GM12878 (cell line): ENCODE measurements at regions of chr3 and their contacts with region 1.

Region 1: DNA sequence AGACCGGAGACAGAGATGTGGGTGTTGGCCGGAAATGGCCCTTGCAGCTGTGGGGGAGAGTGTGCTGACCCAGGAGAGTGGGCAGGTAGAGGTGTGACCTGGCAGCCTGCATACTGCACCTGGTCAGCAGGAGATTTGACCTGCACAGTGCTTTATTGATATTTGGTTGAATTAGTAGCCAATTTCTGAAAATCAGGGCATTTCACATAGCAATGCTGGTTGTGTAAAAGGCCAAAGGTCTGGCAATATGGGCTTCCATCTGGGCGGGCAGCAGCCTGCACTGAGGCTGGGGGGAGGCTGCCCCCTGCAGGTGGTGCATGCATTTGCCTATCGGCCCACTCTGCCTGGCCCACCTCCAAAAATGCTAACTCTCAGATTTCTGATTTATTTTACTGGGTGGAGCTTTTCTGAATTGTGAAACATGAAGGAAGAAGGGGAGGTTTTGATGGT is 9.4 kb upstream of the MGLL start:
- DNase-seq: no peak
- ATAC-seq: peak; percentile 15; the same call in 1 of the 3 replicates
- H3K4me3 ChIP-seq: no peak overlapping the region
- H3K27ac ChIP-seq: no peak overlapping the region
- H3K4me1 ChIP-seq: peaks cover 37% of the 10 kb centered on the region
- H3K27me3 ChIP-seq: no peaks in the 10 kb centered on the region
- CTCF ChIP-seq: peak; percentile 37 to 64 (median 58)
- EP300 ChIP-seq: no peak
- POLR2A ChIP-seq: no peak
- RAD21 ChIP-seq: peak; percentile 73

Region 2: GRCh38 chr3:127697551-127698240 is 134.1 kb before region 1 on chr3:
- CTCF ChIA-PET with region 1: interaction called, 12 read pairs
- POLR2A ChIA-PET with region 1: no interaction called
- RAD21 ChIA-PET with region 1: no interaction called
- SMC1A ChIA-PET with region 1: interaction called, 9 read pairs
- in situ Hi-C with region 1: no loop called
- intact Hi-C with region 1: loop called (anchors 5 kb)
- DNase-seq: peak; percentile 48
- ATAC-seq: peak; percentile 94
- H3K4me3 ChIP-seq: no peak overlapping the region
- H3K27ac ChIP-seq: no peak overlapping the region; the same call in 1 of the 2 replicates
- H3K4me1 ChIP-seq: peaks cover 14% of the 10 kb centered on the region
- H3K27me3 ChIP-seq: no peaks in the 10 kb centered on the region
- CTCF ChIP-seq: no peak
- EP300 ChIP-seq: no peak
- POLR2A ChIP-seq: peak; percentile 46
- RAD21 ChIP-seq: no peak

Region 3: GRCh38 chr3:127762077-127762786 is 69.5 kb before region 1 on chr3:
- CTCF ChIA-PET with region 1: interaction called, 3 read pairs
- POLR2A ChIA-PET with region 1: interaction called, 5 read pairs
- RAD21 ChIA-PET with region 1: interaction called, 11 read pairs
- SMC1A ChIA-PET with region 1: interaction called, 21 read pairs
- in situ Hi-C with region 1: no loop called
- intact Hi-C with region 1: no loop called
- DNase-seq: peak; percentile 56
- ATAC-seq: peak; percentile 75
- H3K4me3 ChIP-seq: peak overlapping the region; percentile 62
- H3K27ac ChIP-seq: peak overlapping the region; percentile 96
- H3K4me1 ChIP-seq: peaks cover 64% of the 10 kb centered on the region
- H3K27me3 ChIP-seq: no peaks in the 10 kb centered on the region
- CTCF ChIP-seq: no peak
- EP300 ChIP-seq: peak; percentile 20 to 26; a peak in 1 of 4 replicates
- POLR2A ChIP-seq: peak; percentile 69
- RAD21 ChIP-seq: peak; percentile 13; the same call in 1 of the 2 replicates

Region 4: DNA sequence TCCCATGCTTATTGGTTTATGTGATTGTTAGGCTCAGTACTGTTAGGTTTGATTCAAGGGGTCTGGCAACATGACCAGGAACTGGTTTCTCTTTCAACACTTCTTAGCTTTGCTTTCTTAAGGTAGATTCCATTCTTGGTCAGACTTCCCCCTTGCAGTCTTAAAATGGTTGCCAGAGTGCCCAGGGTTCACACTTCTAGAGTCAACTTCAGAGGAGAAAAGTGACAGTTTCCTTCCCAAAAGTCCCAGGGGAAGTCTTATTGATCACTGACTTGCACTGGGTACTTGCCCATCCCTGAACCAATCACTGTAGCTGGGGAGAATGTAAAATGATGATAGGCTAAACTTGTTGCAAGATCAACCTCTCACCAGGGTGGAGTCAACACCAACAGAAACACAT is 23.6 kb before region 1 on chr3:
- CTCF ChIA-PET with region 1: no interaction called
- POLR2A ChIA-PET with region 1: no interaction called
- RAD21 ChIA-PET with region 1: interaction called, 6 read pairs
- SMC1A ChIA-PET with region 1: interaction called, 14 read pairs
- in situ Hi-C with region 1: no loop called
- intact Hi-C with region 1: no loop called
- DNase-seq: peak; percentile 63
- ATAC-seq: peak; percentile 85
- H3K4me3 ChIP-seq: 0 out of 2 replicates have a peak overlapping the region, but pooled peaks have one; percentile 4
- H3K27ac ChIP-seq: peak overlapping the region; percentile 45
- H3K4me1 ChIP-seq: peaks cover 22% of the 10 kb centered on the region
- H3K27me3 ChIP-seq: no peaks in the 10 kb centered on the region
- CTCF ChIP-seq: no peak
- EP300 ChIP-seq: peak in 1 of 2 experiments; percentile 22; a peak in 1 of 4 replicates
- POLR2A ChIP-seq: no peak
- RAD21 ChIP-seq: no peak

Region 5: DNA sequence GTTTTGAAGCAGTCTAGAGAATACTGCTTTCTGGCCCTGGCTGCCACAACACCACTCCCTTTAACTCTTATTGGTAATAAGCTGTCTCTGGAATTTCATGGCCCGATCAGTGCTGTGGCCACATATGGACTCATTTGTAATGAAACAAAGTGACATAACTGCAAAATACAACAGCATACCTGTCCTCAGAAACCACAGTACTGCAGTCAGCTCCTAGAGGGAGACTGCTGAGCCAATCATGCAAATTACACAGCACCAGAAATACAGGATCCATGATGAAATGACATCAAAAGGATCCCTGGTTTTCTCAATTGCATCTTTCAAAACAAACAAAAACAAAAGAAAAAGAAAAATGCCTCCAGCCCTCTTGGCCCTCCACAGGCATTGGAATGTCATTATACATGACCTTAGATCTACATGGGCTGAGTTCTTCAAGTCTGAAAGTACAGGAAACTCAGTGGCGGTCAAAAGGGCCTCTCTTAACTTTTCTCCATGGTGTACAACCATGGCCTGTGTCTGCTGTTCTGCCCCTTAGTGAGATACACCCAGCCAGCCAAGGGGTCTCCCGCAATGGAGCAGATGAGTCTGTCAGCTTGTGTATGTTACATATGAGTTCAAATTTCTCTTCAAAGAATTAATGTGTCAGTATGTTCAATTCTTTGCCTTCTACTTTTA is 58.4 kb after region 1 on chr3:
- CTCF ChIA-PET with region 1: no interaction called
- POLR2A ChIA-PET with region 1: interaction called, 3 read pairs
- RAD21 ChIA-PET with region 1: no interaction called
- SMC1A ChIA-PET with region 1: no interaction called
- in situ Hi-C with region 1: no loop called
- intact Hi-C with region 1: loop called (anchors 2 kb)
- DNase-seq: no peak
- ATAC-seq: peak; percentile 77
- H3K4me3 ChIP-seq: no peak overlapping the region
- H3K27ac ChIP-seq: peak overlapping the region; percentile 47
- H3K4me1 ChIP-seq: peaks cover 3% of the 10 kb centered on the region; the same call in 1 of the 2 replicates
- H3K27me3 ChIP-seq: no peaks in the 10 kb centered on the region
- CTCF ChIP-seq: no peak
- EP300 ChIP-seq: no peak
- POLR2A ChIP-seq: no peak
- RAD21 ChIP-seq: no peak